Activated CD4-positive, alpha-beta T cell treated with anti-CD3 and anti-CD28 coated beads, Interleukin-2, amount 10 ng/mL, durations not matched to agents 7 days and 5 days (primary cell): ENCODE measurements at regions of chr2 and their contacts with region 1.

Region 1: GRCh38 chr2:23436346-23437098 is 51.5 kb downstream of the KLHL29 start:
- DNase-seq: peak; percentile 24
- H3K4me3 Mint-ChIP-seq: no peak overlapping the region
- H3K27ac Mint-ChIP-seq: no peak overlapping the region
- H3K4me1 Mint-ChIP-seq: peaks cover 11% of the 10 kb centered on the region
- H3K27me3 Mint-ChIP-seq: peaks cover 31% of the 10 kb centered on the region

Region 2: DNA sequence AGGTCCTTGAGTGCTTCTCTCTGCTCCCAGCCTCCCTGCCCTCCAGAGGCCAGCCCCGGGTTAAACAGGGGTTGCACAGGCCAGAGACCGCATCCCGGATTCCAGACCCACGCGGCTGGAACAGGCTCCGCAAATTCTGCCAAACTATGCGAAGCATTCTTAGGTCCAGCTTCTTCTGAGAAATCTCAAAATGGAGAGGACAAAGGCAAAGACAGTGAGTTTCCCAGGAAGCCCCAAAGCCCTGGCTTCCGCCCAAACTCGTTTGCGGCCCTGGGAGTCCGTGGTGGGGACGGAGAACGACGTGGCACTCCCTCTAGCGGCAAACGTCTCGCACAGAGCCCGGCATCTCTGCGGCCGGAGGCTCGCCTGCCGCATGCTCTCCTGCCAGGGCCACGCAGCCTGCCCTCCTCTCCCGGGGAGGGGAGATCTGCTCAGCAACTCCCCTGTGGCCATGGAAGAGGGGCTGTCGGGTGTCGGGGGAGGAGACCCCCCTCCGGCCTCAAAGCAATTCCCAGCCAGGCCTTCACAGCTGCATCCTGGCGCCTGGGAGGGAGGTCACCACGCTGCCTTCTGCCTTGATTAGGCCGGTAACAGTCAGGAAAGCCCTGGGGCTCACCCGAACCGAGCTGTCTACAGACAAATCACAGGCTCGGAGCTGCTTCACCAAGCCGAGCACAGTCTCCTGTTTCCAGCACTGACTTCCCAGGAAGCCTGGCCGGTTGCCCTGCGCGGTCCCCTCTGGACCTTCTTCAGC is 85.0 kb before region 1 on chr2:
- CTCF ChIA-PET with region 1: no interaction called
- POLR2A ChIA-PET with region 1: no interaction called
- DNase-seq: peak; percentile 56
- H3K4me3 Mint-ChIP-seq: no peak overlapping the region
- H3K27ac Mint-ChIP-seq: no peak overlapping the region
- H3K4me1 Mint-ChIP-seq: peaks cover 2% of the 10 kb centered on the region
- H3K27me3 Mint-ChIP-seq: peaks cover 15% of the 10 kb centered on the region

Region 3: GRCh38 chr2:23449413-23449812 is 12.9 kb after region 1 on chr2:
- CTCF ChIA-PET with region 1: interaction called, 11 read pairs
- POLR2A ChIA-PET with region 1: no interaction called
- DNase-seq: no peak
- H3K4me3 Mint-ChIP-seq: no peak overlapping the region
- H3K27ac Mint-ChIP-seq: no peak overlapping the region
- H3K4me1 Mint-ChIP-seq: peaks cover 29% of the 10 kb centered on the region
- H3K27me3 Mint-ChIP-seq: peaks cover 20% of the 10 kb centered on the region

Region 4: GRCh38 chr2:23460228-23460627 is 23.7 kb after region 1 on chr2:
- CTCF ChIA-PET with region 1: no interaction called
- POLR2A ChIA-PET with region 1: no interaction called
- DNase-seq: no peak
- H3K4me3 Mint-ChIP-seq: no peak overlapping the region
- H3K27ac Mint-ChIP-seq: no peak overlapping the region
- H3K4me1 Mint-ChIP-seq: peaks cover 9% of the 10 kb centered on the region
- H3K27me3 Mint-ChIP-seq: peaks cover 7% of the 10 kb centered on the region